MCF 10A (cell line): ENCODE measurements at regions of chr19 and their contacts with region 1.

Region 1: DNA sequence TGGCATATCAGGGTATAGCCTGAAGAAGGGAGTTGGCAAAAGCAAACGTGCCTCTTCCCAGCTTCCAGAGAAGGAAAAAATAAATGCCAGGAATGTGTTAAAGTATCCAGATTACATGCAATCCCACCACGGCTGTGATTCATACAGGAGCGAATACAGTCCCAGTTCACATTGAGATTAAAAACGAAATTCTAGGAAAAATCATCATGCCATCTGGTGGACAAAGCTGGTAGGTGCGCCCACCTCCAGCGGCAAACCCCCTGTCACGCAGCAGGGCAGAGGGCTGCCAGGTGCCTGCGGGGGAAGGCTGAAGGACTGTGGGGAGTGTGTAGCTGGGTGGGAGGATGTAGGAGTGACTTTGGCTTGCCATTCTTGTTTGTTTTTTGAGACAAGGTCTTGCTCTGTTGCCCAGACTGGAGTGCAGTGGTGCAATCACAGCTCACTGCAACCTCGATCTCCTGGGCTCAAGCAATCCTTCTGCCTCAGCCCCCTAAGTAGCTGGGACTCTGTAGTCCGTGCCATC is 6.4 kb upstream of the DMWD start:
- DNase-seq: peak; percentile 77
- H3K4me3 Mint-ChIP-seq: no peak overlapping the region
- H3K27ac Mint-ChIP-seq: no peak overlapping the region
- H3K4me1 Mint-ChIP-seq: no peaks in the 10 kb centered on the region
- H3K27me3 Mint-ChIP-seq: no peaks in the 10 kb centered on the region
- CTCF ChIP-seq: peak; percentile 80

Region 2: DNA sequence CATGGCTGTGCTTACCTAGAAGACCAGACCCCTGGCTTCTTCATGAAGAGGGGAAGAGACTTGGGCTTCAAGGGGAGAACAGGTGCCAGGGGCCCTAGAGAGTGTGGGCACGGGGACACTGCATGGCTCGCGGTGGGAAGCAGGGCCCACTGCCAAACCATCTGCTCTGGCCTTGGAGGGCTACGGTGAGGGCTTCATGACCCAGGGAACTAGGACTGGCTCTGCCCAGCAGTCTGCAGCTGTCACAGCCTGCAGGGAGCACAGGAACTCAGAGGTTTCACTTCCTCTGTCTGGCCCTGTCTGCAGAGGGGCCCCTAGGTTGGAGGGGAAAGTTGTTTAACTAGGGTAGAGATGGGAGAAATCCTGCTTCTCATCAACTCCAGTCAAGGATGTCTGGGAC is 379.7 kb before region 1 on chr19:
- CTCF ChIA-PET with region 1: no interaction called
- POLR2A ChIA-PET with region 1: no interaction called
- intact Hi-C with region 1: no loop called
- DNase-seq: no peak
- H3K4me3 Mint-ChIP-seq: no peak overlapping the region
- H3K27ac Mint-ChIP-seq: no peak overlapping the region
- H3K4me1 Mint-ChIP-seq: peaks cover 29% of the 10 kb centered on the region
- H3K27me3 Mint-ChIP-seq: no peaks in the 10 kb centered on the region
- CTCF ChIP-seq: no peak

Region 3: DNA sequence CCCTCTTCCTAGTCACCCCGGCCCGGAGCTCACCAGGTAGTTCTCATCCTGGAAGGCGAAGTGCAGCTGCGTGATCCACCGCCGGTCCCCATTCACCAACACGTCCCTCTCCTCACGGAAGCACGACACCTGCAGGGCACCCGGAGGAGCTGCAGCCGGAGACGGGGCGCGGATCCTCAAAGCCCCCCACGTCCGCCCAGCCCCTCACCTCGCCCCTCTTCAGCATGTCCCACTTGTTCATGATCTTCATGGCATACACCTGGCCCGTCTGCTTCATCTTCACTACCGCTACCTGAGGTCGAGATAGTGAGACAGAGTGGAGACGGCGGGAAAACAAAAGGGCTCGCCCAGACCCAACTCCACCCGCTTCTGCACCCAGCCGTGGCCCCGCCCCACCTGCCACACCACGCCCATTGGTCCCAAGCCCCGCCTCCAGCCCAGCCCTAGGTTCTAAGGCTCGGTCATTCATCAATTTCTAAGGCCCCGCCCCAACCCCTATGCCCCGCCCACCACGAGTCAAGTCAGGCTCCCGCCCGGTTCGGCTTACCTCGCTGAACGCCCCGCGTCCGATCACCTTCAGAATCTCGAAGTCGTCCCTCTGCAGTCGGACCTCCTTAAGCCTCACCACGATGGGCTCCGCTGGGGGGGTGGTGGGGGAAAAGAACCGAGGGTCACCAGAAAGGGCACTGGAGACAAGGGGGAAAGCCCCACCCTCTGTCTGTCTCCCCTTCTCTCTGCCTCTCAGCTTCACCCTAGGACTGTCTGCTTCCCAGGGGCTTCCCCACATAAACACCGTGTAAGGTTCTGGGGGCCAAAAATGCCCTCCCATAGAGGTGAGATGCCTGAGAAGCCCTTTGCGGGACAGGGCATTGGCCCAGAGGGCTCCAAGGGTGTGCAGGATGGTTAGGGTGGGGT is 19.6 kb before region 1 on chr19:
- CTCF ChIA-PET with region 1: interaction called, 11 read pairs
- POLR2A ChIA-PET with region 1: interaction called, 6 read pairs
- intact Hi-C with region 1: no loop called
- DNase-seq: peak; percentile 95
- H3K4me3 Mint-ChIP-seq: peak overlapping the region; percentile 58
- H3K27ac Mint-ChIP-seq: no peak overlapping the region
- H3K4me1 Mint-ChIP-seq: peaks cover 28% of the 10 kb centered on the region
- H3K27me3 Mint-ChIP-seq: no peaks in the 10 kb centered on the region
- CTCF ChIP-seq: peak; percentile 68

Region 4: DNA sequence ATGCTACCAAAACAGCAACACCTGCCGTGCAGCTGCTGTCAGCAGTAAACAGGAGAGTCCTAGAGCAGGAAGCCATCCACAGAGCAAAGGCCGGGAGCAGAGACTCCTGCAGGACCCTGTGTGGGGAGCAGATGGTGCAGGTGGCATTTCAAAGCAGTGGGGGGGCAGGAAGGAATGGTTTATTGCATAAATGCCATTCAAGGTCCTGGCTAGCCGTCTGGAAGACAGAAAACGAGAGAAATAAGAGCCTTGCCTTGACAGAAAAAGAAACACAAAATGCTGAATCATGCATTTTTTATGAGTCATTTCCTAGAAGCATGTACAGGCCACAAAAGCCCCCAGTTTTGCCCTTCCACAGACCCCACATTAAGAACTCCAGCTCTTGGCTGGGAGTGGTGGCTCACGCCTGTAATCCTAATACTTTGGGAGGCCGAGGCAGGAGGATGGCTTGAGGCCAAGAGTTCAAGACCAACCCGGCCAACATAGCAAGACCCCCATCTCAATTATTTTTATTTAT is 10.6 kb after region 1 on chr19:
- CTCF ChIA-PET with region 1: interaction called, 11 read pairs
- POLR2A ChIA-PET with region 1: interaction called, 9 read pairs
- intact Hi-C with region 1: no loop called
- DNase-seq: peak; percentile 81
- H3K4me3 Mint-ChIP-seq: no peak overlapping the region
- H3K27ac Mint-ChIP-seq: peak overlapping the region; percentile 11
- H3K4me1 Mint-ChIP-seq: peaks cover 23% of the 10 kb centered on the region
- H3K27me3 Mint-ChIP-seq: no peaks in the 10 kb centered on the region
- CTCF ChIP-seq: no peak

Region 5: DNA sequence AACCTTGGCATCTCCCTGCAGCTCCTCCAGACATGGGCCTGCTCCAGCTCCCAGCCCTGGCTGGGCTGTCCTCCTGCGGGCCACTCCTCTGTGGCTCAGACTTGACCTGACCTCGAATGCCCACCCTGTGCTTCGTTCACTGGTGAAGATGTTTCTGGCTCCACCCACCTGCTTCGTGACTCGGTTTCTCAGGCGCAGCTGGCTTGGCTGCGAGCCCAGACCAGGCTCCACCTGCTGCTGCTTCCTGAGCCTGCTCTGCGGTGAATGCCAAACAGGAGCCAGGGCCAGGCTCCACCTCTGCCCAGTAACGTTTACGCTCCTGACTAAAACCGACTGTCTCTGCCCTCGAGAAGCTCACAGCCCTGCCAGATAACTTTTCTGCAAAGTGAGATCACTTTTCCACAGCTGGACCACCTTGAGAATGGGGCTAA is 25.0 kb after region 1 on chr19:
- CTCF ChIA-PET with region 1: interaction called, 11 read pairs
- POLR2A ChIA-PET with region 1: no interaction called
- intact Hi-C with region 1: no loop called
- DNase-seq: peak; percentile 60
- H3K4me3 Mint-ChIP-seq: no peak overlapping the region
- H3K27ac Mint-ChIP-seq: peak overlapping the region; percentile 17
- H3K4me1 Mint-ChIP-seq: peaks cover 15% of the 10 kb centered on the region
- H3K27me3 Mint-ChIP-seq: no peaks in the 10 kb centered on the region
- CTCF ChIP-seq: no peak